Activated T-helper 1 cell treated with anti-CD3 and anti-CD28 coated beads, Interleukin-12 subunit alpha, Interleukin-12 subunit beta, Interleukin-2, Interleukin-4 antibody, amounts not matched to agents 30 ng/mL and 10 ng/mL and 1 ng/mL, durations not matched to agents 14 hours and 24 hours and 36 hours (primary cell): ENCODE measurements at regions of chr5 and their contacts with region 1.

Region 1: DNA sequence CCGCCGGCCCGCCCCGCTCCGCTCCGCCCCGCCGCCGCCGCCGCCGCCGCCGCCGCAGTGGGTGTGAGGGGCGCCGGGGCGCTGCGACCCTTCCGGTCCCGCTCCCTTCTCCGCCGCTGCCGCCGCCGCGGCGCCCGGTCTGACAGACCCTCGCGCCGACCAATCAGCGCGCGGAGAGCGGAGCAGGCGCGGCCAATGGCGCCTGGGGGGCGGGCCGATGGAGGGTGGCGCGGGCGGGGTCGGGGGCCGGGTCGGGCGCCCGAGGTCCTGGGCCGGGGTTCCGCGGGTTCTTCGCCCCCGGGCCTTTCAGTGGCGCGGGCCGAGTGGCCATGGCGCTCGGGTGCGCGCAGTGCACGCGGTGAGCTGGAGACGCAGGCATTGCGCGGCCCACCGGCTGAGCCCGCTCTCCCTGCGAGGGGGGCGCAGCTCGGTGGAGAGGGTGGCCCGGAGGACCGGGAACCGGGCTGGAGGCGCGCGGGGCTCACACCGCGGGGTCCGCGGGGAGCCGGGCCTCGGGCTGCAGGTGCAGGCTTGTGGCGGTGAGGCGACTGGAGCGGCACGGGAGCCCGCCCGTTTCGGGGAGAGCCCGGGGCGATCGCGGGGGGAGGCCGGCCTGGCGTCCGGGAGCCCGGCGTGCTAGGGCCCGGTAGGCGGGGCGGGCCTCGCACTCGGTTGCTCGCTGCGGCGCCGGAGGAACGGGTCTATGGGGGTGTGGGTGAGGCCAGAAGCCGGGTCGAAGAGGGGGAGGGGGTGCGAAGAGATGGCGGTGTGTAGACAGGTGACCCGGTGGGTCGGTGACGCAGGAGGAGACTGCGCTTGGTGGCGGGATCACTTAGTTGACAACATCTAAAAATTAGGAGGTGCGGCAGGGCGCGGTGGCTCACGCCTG is at the start of gene MAPK9:
- DNase-seq: peak; percentile 83
- H3K4me3 Mint-ChIP-seq: peak within 1 kb of the TSS; percentile 96
- H3K27ac Mint-ChIP-seq: peak within 1 kb of the TSS; percentile 98
- H3K4me1 Mint-ChIP-seq: peaks cover 26% of the 10 kb centered on the region
- H3K27me3 Mint-ChIP-seq: no peaks in the 10 kb centered on the region
- total RNA-seq, gene MAPK9: 39.8 and 44.6 TPM in 2 replicates

Region 2: GRCh38 chr5:179559284-179560252 is 732.6 kb before region 1 on chr5:
- intact Hi-C with region 1: loop called (anchors 10 kb)
- DNase-seq: peak; percentile 93
- H3K4me3 Mint-ChIP-seq: peak overlapping the region; percentile 94
- H3K27ac Mint-ChIP-seq: peak overlapping the region; percentile 86
- H3K4me1 Mint-ChIP-seq: peaks cover 10% of the 10 kb centered on the region
- H3K27me3 Mint-ChIP-seq: no peaks in the 10 kb centered on the region

Region 3: GRCh38 chr5:180071531-180072255 is 220.5 kb before region 1 on chr5 and contains the start of gene RNF130:
- intact Hi-C with region 1: loop called (anchors 5 kb)
- DNase-seq: peak; percentile 76
- H3K4me3 Mint-ChIP-seq: peak within 1 kb of the TSS; percentile 82
- H3K27ac Mint-ChIP-seq: peak within 1 kb of the TSS; percentile 50
- H3K4me1 Mint-ChIP-seq: peaks cover 5% of the 10 kb centered on the region
- H3K27me3 Mint-ChIP-seq: peaks cover 39% of the 10 kb centered on the region
- total RNA-seq, gene RNF130: 7.6 and 7.7 TPM in 2 replicates

Region 4: GRCh38 chr5:180142021-180142765 is 150.0 kb before region 1 on chr5:
- intact Hi-C with region 1: no loop called
- DNase-seq: no peak
- H3K4me3 Mint-ChIP-seq: no peak overlapping the region
- H3K27ac Mint-ChIP-seq: no peak overlapping the region
- H3K4me1 Mint-ChIP-seq: no peaks in the 10 kb centered on the region
- H3K27me3 Mint-ChIP-seq: no peaks in the 10 kb centered on the region

Region 5: DNA sequence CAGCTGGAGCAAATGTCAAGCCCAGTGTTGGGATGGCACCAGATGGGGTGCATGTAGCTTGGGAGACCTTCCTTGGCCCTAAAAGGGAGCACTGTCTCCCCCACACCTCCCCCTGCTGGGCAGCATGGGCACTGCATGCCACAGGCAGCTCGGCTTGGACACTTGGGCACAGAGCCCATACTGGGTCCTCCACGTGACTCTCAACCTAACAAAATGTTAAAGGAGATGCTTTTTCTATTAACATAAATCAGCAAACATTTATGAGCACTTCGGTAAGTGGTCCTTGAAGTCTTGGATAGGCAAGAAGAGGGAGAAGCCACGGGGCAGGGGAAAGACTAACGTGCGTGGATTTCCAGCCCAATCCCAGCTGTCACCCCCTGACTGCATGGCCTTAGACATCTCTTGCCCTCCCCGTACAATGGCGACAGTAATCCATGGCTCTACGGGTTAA is 23.6 kb after region 1 on chr5:
- intact Hi-C with region 1: loop called (anchors 1 kb)
- DNase-seq: peak; percentile 55
- H3K4me3 Mint-ChIP-seq: no peak overlapping the region
- H3K27ac Mint-ChIP-seq: no peak overlapping the region
- H3K4me1 Mint-ChIP-seq: no peaks in the 10 kb centered on the region
- H3K27me3 Mint-ChIP-seq: no peaks in the 10 kb centered on the region

Region 6: DNA sequence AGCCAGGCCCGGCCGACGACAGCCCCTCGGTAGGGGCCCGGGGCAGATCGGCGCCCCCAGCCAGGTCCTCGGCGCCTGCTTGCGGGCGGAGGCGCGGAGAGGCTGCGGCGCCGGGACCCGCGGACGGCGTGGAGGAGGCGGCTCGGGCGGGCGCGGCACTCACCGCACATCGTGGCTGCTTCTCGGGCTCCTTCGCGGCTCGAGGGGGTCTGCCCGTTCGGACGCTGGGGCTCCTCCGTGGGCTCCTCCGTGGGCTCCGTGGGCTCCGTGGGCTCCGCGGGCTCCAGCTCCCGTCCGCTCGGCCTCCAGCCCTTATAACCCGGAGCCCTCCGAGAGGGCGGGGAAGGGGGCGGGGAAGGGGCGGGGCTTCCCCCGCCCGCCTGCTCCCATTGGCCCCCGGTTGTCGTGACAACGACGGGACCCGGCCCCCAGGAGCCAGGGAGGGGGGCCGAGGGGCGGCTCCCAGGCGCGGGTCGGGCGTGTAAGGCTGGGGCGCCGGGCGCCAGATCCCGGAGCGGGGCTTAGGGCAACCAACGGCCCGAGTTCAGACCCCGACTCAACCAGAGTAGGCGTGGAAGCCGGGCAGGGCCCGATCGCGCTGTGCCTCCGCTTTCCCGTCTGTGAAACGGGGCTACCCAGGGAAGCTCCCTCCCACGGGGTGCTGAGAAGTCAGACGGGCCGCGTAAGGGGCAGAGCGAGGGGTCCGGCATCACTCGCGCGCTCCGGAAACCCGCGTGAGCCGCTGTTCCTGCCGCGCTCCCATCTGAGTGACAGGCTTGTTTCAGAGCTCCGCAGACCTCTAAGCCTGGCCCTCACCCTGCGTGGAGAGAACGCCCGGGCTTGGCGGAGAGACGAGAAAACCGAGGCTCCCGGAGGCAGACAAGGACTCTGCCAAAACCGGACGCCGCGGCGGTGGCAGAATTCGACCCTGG is 61.1 kb after region 1 on chr5 and contains the start of gene GFPT2:
- intact Hi-C with region 1: loop called (anchors 1 kb)
- DNase-seq: peak; percentile 61
- H3K4me3 Mint-ChIP-seq: peak within 1 kb of the TSS; percentile 70
- H3K27ac Mint-ChIP-seq: no peak within 1 kb of the TSS
- H3K4me1 Mint-ChIP-seq: no peaks in the 10 kb centered on the region
- H3K27me3 Mint-ChIP-seq: peaks cover 50% of the 10 kb centered on the region
- total RNA-seq, gene GFPT2: 1.1 and 1.4 TPM in 2 replicates

Region 7: DNA sequence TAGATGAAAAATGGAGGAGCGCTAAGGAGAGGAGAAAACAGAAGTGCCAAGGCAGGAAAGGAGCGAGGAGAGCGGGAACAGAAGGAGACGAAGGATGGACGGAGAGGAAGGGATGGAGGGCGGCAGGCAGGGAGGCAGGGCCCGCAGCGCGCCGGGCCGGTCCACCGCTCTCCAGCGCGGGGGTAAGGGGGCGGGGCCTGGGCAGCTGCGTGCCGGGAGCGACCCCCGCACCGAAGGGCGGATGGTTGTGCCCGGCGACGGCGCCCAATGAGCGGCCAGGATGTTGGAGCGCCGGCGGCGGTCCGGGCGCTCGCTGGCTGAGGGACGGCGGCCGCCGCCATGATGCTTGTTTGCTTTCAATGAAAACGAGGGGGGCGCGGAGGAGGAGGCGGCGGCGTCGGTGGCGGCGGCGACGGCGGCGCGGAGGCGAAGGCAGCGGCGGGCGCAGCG is 201.9 kb after region 1 on chr5 and contains the start of gene CNOT6:
- intact Hi-C with region 1: loop called (anchors 5 kb)
- DNase-seq: peak; percentile 94
- H3K4me3 Mint-ChIP-seq: peak within 1 kb of the TSS; percentile 90
- H3K27ac Mint-ChIP-seq: peak within 1 kb of the TSS; percentile 93
- H3K4me1 Mint-ChIP-seq: peaks cover 37% of the 10 kb centered on the region
- H3K27me3 Mint-ChIP-seq: no peaks in the 10 kb centered on the region
- total RNA-seq, gene CNOT6: 48.8 and 49.7 TPM in 2 replicates

Region 8: DNA sequence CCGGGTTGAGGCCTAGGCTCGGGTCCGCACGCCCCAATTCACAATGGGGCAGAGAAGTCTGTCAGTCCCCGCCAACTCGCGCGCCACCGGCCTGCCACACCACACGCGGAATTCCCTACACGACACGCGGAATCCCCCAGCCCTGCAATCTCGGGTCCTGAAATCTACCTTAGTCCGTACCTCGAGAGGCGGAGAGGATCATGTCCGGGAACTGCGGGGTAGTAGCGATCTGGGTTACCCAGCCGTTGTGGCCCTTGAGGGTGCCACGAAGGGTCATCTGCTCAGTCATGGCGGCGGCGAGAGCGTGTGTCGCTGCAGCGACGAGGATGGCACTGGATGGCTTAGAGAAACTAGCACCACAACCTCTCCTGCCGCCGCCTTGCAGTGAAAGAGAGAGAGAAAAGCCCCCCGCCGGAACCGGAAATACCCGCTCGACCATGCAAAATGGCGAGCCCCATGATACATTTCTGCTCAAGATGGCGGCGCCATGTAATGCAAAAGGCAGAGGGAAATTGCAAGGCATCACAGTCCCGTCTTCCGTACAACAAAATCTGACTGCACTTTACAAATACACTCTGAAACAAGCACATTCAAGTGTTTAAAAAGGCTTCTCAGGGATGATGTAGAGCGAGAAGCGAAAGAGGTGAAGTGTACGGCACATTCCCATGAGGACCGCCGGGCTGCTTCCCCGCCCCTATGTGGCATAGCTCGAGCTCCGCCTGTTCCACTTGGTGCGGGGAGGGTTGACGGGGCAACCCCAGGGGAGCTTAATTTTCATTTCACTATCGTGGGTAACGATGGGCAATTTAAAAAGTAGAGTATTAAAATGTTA is 951.5 kb after region 1 on chr5 and contains the start of gene RACK1:
- intact Hi-C with region 1: loop called (anchors 10 kb)
- DNase-seq: peak; percentile 82
- H3K4me3 Mint-ChIP-seq: peak within 1 kb of the TSS; percentile 96
- H3K27ac Mint-ChIP-seq: peak within 1 kb of the TSS; percentile 99
- H3K4me1 Mint-ChIP-seq: peaks cover 49% of the 10 kb centered on the region
- H3K27me3 Mint-ChIP-seq: no peaks in the 10 kb centered on the region
- total RNA-seq, gene RACK1: 2,098 and 2,121 TPM in 2 replicates